ENCODE measurements at regions of chr2 and their contacts with region 1.

Region 1: GRCh38 chr2:148814143-148814859 is 60.7 kb upstream of the KIF5C start:
- DNase-seq: no peak
- ATAC-seq: peak in 1 of 4 experiments; percentile 11
- H3K4me3 ChIP-seq: no peak overlapping the region
- H3K4me3 Mint-ChIP-seq: peak overlapping the region in 1 of 3 donors; percentile 37
- H3K27ac ChIP-seq: no peak overlapping the region
- H3K27ac Mint-ChIP-seq: peak overlapping the region; percentile 45 to 57
- H3K4me1 ChIP-seq: peaks cover 2 to 9% of the 10 kb centered on the region in 2 experiments
- H3K4me1 Mint-ChIP-seq: peaks cover 9 to 26% (median 20%) of the 10 kb centered on the region in 3 donors
- H3K27me3 ChIP-seq: peaks cover 0 to 5% of the 10 kb centered on the region in 2 experiments
- H3K27me3 Mint-ChIP-seq: peaks cover 2 to 21% of the 10 kb centered on the region in 2 donors

Region 2: DNA sequence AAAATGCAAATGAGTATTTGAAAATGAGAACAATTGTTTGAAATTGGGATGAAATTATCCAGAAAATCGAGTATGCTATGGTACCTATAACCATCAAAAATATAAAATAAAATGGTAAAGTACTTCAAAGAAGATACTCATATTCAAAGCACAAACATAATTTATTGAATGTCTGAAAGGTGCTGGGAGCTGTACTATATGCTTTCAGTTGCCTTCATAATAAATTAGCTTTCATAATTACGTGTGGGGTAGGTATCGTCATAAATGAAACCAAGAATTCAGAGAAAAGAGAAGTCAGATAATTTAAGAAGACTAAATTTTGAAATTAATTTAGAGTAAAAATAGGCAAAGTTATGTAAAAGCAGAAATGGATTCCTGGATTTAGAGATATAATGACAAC is 1691.4 kb before region 1 on chr2:
- CTCF ChIA-PET with region 1: no interaction called
- POLR2A ChIA-PET with region 1: interaction called in 1 of 2 experiments, 10 read pairs
- DNase-seq: no peak
- ATAC-seq: no peak
- H3K4me3 ChIP-seq: no peak overlapping the region
- H3K4me3 Mint-ChIP-seq: no peak overlapping the region
- H3K27ac ChIP-seq: no peak overlapping the region
- H3K27ac Mint-ChIP-seq: no peak overlapping the region
- H3K4me1 ChIP-seq: no peaks in the 10 kb centered on the region
- H3K4me1 Mint-ChIP-seq: no peaks in the 10 kb centered on the region
- H3K27me3 ChIP-seq: no peaks in the 10 kb centered on the region
- H3K27me3 Mint-ChIP-seq: no peaks in the 10 kb centered on the region

Region 3: DNA sequence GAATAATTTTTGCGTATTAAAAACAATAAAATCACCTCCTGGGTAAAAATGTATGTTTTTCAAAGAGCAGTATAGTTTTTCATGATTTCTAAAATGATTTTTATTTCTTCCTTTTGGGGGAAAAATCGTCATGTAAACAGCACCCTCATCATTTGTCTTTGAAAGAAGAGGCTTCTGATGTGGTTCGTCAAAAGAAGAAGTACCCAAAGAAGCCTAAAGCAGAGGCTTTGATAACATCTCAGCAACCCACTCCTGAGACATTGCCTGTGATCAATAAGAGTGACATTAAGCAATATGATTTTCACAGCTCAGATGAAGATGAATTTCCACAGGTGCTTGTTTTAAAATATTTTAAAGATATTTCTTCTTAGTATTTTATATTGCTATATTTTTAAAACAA is 49.5 kb before region 1 on chr2:
- CTCF ChIA-PET with region 1: no interaction called
- POLR2A ChIA-PET with region 1: no interaction called
- DNase-seq: peak in 4 of 35 experiments; percentile 6 to 52 (median 6)
- ATAC-seq: peak in 3 of 4 experiments; percentile 73 to 99 (median 77)
- H3K4me3 ChIP-seq: no peak overlapping the region
- H3K4me3 Mint-ChIP-seq: no peak overlapping the region
- H3K27ac ChIP-seq: no peak overlapping the region
- H3K27ac Mint-ChIP-seq: peak overlapping the region; percentile 58 to 61
- H3K4me1 ChIP-seq: peaks cover 0 to 2% of the 10 kb centered on the region in 2 experiments
- H3K4me1 Mint-ChIP-seq: peaks cover 31 to 40% (median 39%) of the 10 kb centered on the region in 3 donors
- H3K27me3 ChIP-seq: no peaks in the 10 kb centered on the region
- H3K27me3 Mint-ChIP-seq: no peaks in the 10 kb centered on the region

Region 4: GRCh38 chr2:148909114-148909513 is 94.8 kb after region 1 on chr2:
- CTCF ChIA-PET with region 1: no interaction called
- POLR2A ChIA-PET with region 1: no interaction called
- DNase-seq: no peak
- ATAC-seq: no peak
- H3K4me3 ChIP-seq: no peak overlapping the region
- H3K4me3 Mint-ChIP-seq: no peak overlapping the region
- H3K27ac ChIP-seq: no peak overlapping the region
- H3K27ac Mint-ChIP-seq: no peak overlapping the region
- H3K4me1 ChIP-seq: no peaks in the 10 kb centered on the region
- H3K4me1 Mint-ChIP-seq: peaks cover 4 to 13% (median 7%) of the 10 kb centered on the region in 3 donors
- H3K27me3 ChIP-seq: peaks cover 0 to 4% of the 10 kb centered on the region in 2 experiments
- H3K27me3 Mint-ChIP-seq: peaks cover 0 to 9% of the 10 kb centered on the region in 2 donors

Region 5: DNA sequence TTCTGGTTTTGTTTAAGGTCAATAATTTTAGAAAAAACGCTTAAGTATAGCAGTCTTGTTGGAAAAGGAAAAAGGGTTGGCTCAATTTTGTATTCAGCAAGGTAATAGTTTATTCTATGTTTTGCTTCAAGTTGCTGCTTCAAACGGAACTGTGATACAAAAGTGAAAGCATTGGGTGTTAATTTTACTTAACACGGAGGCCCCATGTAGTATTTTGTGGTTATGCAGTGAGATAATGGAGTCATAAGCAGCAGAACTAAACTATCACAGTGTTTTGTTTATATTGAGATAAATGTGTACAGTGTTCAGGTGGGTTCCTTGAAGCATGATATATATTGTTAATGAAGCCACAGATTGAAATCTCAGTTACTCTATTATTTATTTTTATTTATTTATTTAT is 157.2 kb after region 1 on chr2:
- CTCF ChIA-PET with region 1: no interaction called
- POLR2A ChIA-PET with region 1: no interaction called
- DNase-seq: peak in 1 of 35 experiments; percentile 10
- ATAC-seq: no peak
- H3K4me3 ChIP-seq: no peak overlapping the region
- H3K4me3 Mint-ChIP-seq: no peak overlapping the region
- H3K27ac ChIP-seq: no peak overlapping the region
- H3K27ac Mint-ChIP-seq: no peak overlapping the region
- H3K4me1 ChIP-seq: no peaks in the 10 kb centered on the region
- H3K4me1 Mint-ChIP-seq: peaks cover 8 to 13% (median 11%) of the 10 kb centered on the region in 3 donors
- H3K27me3 ChIP-seq: no peaks in the 10 kb centered on the region
- H3K27me3 Mint-ChIP-seq: no peaks in the 10 kb centered on the region